Heart left ventricle (tissue), 16 donors: ENCODE measurements at regions of chr13 and their contacts with region 1.

Region 1: GRCh38 chr13:26228096-26228495 is 6.0 kb upstream of the RNF6 start:
- DNase-seq: no peak
- ATAC-seq: no peak
- H3K4me3 ChIP-seq: no peak overlapping the region
- H3K27ac ChIP-seq: no peak overlapping the region
- H3K4me1 ChIP-seq: peaks cover 0 to 13% (median 0%) of the 10 kb centered on the region in 12 donors
- H3K27me3 ChIP-seq: no peaks in the 10 kb centered on the region
- CTCF ChIP-seq: no peak
- POLR2A ChIP-seq: no peak

Region 2: DNA sequence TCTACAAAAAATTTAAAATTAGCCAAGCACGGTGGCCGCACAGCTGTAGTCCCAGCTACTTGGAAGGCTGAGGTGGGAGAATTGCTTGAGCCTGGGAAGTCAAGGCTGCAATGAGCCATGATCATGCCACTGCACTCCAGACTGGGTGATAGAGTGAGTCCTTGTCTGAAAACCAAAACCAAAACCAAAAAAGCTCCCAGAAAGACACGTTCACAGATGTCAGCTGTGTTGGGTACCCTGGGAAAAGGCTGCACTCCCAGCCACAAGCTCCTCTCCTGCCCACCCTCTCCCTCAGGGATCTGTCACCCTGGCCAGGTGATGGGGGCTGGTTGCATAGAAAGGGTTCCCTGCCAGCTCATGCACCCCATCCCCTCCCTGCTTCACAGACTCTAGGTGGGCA is 59.3 kb before region 1 on chr13:
- intact Hi-C with region 1: no loop called
- DNase-seq: no peak
- ATAC-seq: no peak
- H3K4me3 ChIP-seq: no peak overlapping the region
- H3K27ac ChIP-seq: no peak overlapping the region
- H3K4me1 ChIP-seq: no peaks in the 10 kb centered on the region
- H3K27me3 ChIP-seq: no peaks in the 10 kb centered on the region
- CTCF ChIP-seq: no peak
- POLR2A ChIP-seq: no peak

Region 3: DNA sequence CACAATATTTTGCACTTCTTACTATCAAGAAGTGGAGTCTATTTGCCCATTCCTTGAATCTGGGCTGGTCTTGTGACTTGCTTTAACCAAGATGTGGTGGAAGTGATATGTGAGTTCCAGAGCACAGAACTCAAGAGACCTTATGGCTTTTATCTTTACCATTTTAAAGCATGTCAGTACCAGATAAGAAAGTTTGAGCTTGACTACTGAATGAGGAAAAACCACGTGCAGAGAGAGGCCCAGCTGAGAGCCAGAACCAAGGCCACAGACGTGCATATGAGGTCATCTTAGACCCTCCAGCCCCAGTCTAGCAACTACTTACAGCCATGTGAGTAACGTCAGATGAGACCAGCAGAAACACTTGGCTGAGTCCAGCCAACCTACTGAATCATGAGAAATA is 19.5 kb after region 1 on chr13:
- intact Hi-C with region 1: loop called in 3 of 10 experiments (anchors 2 kb)
- DNase-seq: no peak
- ATAC-seq: peak in 1 of 4 donors; percentile 31
- H3K4me3 ChIP-seq: no peak overlapping the region
- H3K27ac ChIP-seq: no peak overlapping the region
- H3K4me1 ChIP-seq: no peaks in the 10 kb centered on the region
- H3K27me3 ChIP-seq: peaks cover 0 to 3% (median 0%) of the 10 kb centered on the region in 9 donors
- CTCF ChIP-seq: no peak
- POLR2A ChIP-seq: no peak